Psoas muscle (tissue), 8 donors: ENCODE measurements at regions of chr19 and their contacts with region 1.

Region 1: GRCh38 chr19:56105090-56105701 is 15.9 kb downstream of the ZNF787 start:
- DNase-seq: peak; percentile 72 to 88
- ATAC-seq: peak; percentile 80 to 90 (median 85)
- H3K4me3 ChIP-seq: peak overlapping the region; percentile 16
- H3K27ac ChIP-seq: peak overlapping the region; percentile 59
- H3K4me1 ChIP-seq: peaks cover 33% of the 10 kb centered on the region
- H3K27me3 ChIP-seq: no peaks in the 10 kb centered on the region
- CTCF ChIP-seq: peak; percentile 77

Region 2: DNA sequence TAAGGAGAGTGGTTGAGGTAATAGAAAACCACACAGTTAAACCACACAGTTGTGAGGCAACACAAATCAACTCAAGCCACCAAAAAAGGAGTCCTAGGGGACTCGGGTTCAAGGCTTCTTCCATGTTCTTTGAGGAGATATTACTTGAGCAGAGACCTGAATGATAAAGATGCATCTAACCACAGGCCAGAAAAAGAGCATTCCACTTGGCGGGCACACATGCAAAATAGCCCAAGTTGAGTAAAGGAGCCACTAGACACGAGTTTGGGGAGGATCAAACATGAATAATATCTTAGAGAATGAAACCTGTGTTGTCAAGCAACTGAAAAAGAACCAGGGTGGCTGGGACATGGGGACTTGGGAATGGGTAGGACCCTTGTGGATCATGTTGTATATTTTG is 238.7 kb before region 1 on chr19:
- intact Hi-C with region 1: no loop called
- DNase-seq: no peak
- ATAC-seq: no peak
- H3K4me3 ChIP-seq: no peak overlapping the region
- H3K27ac ChIP-seq: no peak overlapping the region
- H3K4me1 ChIP-seq: no peaks in the 10 kb centered on the region
- H3K27me3 ChIP-seq: no peaks in the 10 kb centered on the region
- CTCF ChIP-seq: no peak

Region 3: DNA sequence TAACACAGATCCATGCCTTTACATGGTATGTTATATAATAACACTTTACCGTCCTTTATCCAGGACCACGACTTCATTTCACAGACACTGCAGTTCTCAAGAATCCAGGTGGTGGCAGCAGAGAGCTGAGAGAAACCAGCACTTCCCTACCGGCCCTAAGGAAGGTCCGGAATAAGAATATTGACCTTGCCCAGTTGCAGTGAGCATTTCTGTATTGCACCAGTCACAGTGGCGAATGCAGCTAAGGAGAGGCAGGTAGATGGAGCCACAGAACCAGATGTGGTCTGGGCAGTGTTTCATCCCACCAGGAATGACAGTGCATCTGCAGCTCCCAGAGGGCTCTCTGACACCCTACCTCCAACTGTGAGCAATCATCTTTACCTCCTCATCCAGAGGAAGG is 28.7 kb before region 1 on chr19:
- intact Hi-C with region 1: no loop called
- DNase-seq: no peak
- ATAC-seq: peak; percentile 59 to 82 (median 74)
- H3K4me3 ChIP-seq: no peak overlapping the region
- H3K27ac ChIP-seq: no peak overlapping the region
- H3K4me1 ChIP-seq: peaks cover 7% of the 10 kb centered on the region
- H3K27me3 ChIP-seq: peaks cover 0 to 6% (median 0%) of the 10 kb centered on the region in 3 donors
- CTCF ChIP-seq: peak; percentile 87

Region 4: DNA sequence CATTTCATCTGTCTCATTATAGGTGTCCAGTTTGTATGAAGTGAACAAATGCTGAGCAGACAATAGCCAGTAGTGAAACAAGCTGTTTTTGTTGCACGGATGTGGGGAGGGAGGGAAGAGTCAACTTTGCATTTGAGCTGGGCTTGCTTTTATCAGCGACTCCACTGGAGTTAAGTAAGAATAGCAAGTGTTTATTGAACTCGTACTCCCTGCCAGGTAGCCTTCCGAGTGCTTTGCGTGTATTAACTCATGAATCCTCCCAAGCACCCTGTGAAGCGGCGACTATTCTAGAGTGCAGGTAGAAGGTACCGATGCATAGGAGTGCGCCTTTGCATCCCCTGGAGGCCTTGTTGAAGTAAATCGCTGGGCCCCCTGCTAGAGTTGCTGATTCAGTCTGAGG is 31.2 kb after region 1 on chr19:
- intact Hi-C with region 1: no loop called
- DNase-seq: no peak
- ATAC-seq: no peak
- H3K4me3 ChIP-seq: no peak overlapping the region
- H3K27ac ChIP-seq: no peak overlapping the region
- H3K4me1 ChIP-seq: peaks cover 6% of the 10 kb centered on the region
- H3K27me3 ChIP-seq: no peaks in the 10 kb centered on the region
- CTCF ChIP-seq: no peak

Region 5: DNA sequence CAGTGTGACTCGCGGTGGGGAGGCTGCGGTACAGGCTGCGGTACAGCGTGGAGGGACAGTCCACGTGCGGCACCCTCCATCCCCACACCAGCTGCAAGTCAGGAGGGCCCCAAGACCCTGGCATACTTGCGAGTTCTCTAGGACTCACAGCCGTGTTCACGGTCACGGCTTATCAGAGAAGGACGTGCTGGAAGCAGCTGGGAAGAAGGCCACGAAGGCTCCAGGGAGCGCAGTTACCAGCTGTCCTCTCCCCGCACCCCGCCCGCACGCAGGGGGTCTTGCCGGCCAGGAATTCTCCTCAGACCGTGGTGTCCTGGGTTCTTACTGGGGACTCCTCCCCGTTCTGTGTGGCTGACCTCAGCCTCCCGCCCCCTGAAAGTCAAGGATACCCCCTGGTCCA is 42.1 kb after region 1 on chr19:
- intact Hi-C with region 1: loop called in 1 of 2 experiments (anchors 5 kb)
- DNase-seq: no peak
- ATAC-seq: no peak
- H3K4me3 ChIP-seq: no peak overlapping the region
- H3K27ac ChIP-seq: no peak overlapping the region
- H3K4me1 ChIP-seq: peaks cover 9% of the 10 kb centered on the region
- H3K27me3 ChIP-seq: no peaks in the 10 kb centered on the region
- CTCF ChIP-seq: no peak